ENCODE measurements at regions of chr4 and their contacts with region 1.

Region 1: DNA sequence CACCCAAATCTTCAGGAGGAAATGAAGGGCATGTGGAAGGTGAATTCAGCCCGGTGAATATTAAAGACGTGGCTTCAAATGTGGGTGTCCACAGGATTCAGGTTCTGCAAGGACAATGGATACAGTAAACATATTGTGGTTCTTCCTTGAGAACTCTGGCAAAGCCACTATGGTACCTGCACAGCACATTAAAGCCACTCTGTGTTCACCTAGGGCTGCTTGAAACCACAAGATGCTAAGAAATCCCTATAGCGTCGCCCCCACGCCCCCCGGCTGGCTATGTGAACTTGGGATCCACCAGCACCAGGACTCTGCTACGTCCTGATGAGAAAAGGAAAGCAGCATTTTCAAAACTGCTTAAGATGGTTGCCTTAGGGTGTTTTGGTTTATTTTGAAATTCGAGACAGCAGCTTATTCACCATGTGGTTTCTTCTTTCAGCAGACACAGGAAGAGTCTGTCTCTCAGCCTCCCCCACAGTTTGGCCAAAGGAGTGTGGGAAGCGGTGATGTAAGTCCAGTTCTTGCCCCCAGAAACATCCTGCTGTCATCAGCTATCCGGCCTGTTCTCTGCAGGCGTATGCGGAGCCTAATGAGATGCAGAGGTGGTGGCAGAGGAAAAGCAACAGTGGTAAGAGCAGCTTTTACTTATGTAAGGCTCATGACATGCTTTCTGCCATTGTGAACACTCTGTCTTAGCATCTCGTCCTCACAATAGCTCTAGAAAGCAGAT is 111.5 kb downstream of the AFAP1 start:
- DNase-seq: peak; percentile 76
- H3K4me3 Mint-ChIP-seq: peak overlapping the region; percentile 56
- H3K27ac Mint-ChIP-seq: peak overlapping the region; percentile 83
- H3K4me1 Mint-ChIP-seq: peaks cover 62% of the 10 kb centered on the region
- H3K27me3 Mint-ChIP-seq: peaks cover 5% of the 10 kb centered on the region

Region 2: GRCh38 chr4:7843831-7844593 is 15.9 kb after region 1 on chr4:
- CTCF ChIA-PET with region 1: interaction called, 11 read pairs
- POLR2A ChIA-PET with region 1: interaction called, 7 read pairs
- DNase-seq: peak; percentile 71
- H3K4me3 Mint-ChIP-seq: no peak overlapping the region
- H3K27ac Mint-ChIP-seq: peak overlapping the region; percentile 13
- H3K4me1 Mint-ChIP-seq: peaks cover 20% of the 10 kb centered on the region
- H3K27me3 Mint-ChIP-seq: no peaks in the 10 kb centered on the region

Region 3: DNA sequence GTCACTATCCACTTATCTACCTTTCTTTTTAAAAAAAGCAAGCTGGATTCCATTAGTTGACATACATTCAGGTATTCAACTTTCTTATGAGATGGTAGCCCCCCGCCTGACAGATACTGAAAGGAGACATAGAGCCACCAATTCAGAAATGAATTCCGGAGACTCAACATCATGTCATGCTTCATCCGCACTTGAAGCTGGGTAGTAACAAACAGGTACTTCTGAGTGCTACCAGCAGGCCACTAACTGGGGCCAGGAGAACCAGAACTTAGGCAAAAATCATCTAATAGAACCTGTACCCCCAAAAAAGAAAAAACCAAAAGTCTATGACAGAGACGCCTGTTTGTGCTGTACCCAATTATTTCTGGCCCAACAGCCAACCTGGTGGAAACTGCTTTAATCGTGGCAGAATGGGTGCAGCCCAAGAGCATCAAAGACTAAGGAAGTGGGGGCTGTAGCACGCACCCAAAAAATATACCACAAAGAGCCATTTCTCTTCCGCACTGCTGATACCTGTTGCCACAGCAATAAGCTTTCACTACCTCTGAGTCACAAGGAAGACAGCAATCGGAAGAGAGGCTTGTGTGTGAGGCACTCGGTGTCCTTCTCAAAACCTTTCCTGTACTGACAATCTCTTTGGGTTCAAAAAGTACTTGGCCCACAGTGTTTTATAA is 26.7 kb after region 1 on chr4:
- CTCF ChIA-PET with region 1: no interaction called
- POLR2A ChIA-PET with region 1: interaction called, 15 read pairs
- DNase-seq: peak; percentile 82
- H3K4me3 Mint-ChIP-seq: peak overlapping the region; percentile 25
- H3K27ac Mint-ChIP-seq: peak overlapping the region; percentile 88
- H3K4me1 Mint-ChIP-seq: peaks cover 76% of the 10 kb centered on the region
- H3K27me3 Mint-ChIP-seq: peaks cover 21% of the 10 kb centered on the region

Measured in activated CD4-positive, alpha-beta memory T cell treated with anti-CD3 and anti-CD28 coated beads, Interleukin-2, amount 10 ng/mL, durations not matched to agents 7 days and 5 days (primary cell).